ENCODE measurements at regions of chr19 and their contacts with region 1.

Region 1: GRCh38 chr19:54159352-54160181 is at the start of gene LENG1:
- DNase-seq: peak; percentile 100
- H3K4me3 ChIP-seq: peak within 1 kb of the TSS; percentile 97
- CTCF ChIP-seq: peak; percentile 25

Region 2: GRCh38 chr19:54137086-54137921 is 22.3 kb before region 1 on chr19 and contains the start of gene CNOT3:
- CTCF ChIA-PET with region 1: interaction called, 4 read pairs
- POLR2A ChIA-PET with region 1: interaction called, 13 read pairs
- DNase-seq: peak; percentile 100
- H3K4me3 ChIP-seq: peak within 1 kb of the TSS; percentile 78
- CTCF ChIP-seq: no peak

Region 3: GRCh38 chr19:54189735-54190502 is 30.4 kb after region 1 on chr19:
- CTCF ChIA-PET with region 1: interaction called, 14 read pairs
- POLR2A ChIA-PET with region 1: interaction called, 5 read pairs
- DNase-seq: peak; percentile 100
- H3K4me3 ChIP-seq: peak overlapping the region; percentile 89
- CTCF ChIP-seq: no peak

Measured in AG04449 (cell line).